Activated CD4-positive, alpha-beta memory T cell treated with anti-CD3 and anti-CD28 coated beads for 36 hours (primary cell): ENCODE measurements at regions of chr16 and their contacts with region 1.

Region 1: DNA sequence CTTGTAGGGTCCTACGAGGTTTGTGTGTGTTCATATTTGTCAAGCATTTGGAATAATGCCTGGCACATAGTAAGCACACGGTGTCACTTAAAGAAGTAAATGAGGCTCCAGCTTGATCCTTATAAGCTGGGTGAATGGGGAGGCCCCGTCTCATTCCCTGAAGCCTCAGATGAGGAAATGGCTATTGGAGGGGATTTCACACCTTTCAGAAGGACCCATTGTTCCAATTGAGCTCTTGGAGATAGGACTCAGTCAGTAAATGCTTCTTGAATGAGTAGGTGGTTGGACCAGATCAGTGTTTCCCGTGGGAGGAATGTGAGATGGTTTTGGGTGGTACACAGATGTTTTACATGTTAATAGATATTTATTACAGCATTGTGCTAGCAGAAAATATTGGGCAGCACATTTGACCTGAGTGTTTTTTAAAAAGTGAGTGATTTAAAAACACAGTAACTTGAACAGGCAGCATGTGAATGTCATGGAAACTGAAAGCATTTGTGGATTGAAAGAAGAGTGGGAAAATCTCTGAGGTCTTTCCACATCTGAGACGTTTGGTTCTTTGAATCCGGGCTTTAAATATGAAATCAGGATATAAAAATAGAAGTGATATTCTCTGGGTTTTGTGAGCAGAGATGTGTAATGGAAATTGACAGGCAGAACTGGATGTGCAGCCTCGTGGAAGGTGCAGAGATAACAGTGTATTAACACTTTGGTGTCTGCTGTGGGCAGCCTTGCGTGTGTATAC is 36.4 kb upstream of the ARHGAP17 start:
- DNase-seq: no peak
- H3K4me3 Mint-ChIP-seq: peak overlapping the region; percentile 54
- H3K27ac Mint-ChIP-seq: peak overlapping the region; percentile 74
- H3K4me1 Mint-ChIP-seq: peaks cover 47% of the 10 kb centered on the region
- H3K27me3 Mint-ChIP-seq: no peaks in the 10 kb centered on the region

Region 2: GRCh38 chr16:24918641-24919040 is 132.9 kb before region 1 on chr16:
- CTCF ChIA-PET with region 1: no interaction called
- POLR2A ChIA-PET with region 1: no interaction called
- intact Hi-C with region 1: no loop called
- DNase-seq: no peak
- H3K4me3 Mint-ChIP-seq: no peak overlapping the region
- H3K27ac Mint-ChIP-seq: no peak overlapping the region
- H3K4me1 Mint-ChIP-seq: peaks cover 10% of the 10 kb centered on the region
- H3K27me3 Mint-ChIP-seq: no peaks in the 10 kb centered on the region

Region 3: DNA sequence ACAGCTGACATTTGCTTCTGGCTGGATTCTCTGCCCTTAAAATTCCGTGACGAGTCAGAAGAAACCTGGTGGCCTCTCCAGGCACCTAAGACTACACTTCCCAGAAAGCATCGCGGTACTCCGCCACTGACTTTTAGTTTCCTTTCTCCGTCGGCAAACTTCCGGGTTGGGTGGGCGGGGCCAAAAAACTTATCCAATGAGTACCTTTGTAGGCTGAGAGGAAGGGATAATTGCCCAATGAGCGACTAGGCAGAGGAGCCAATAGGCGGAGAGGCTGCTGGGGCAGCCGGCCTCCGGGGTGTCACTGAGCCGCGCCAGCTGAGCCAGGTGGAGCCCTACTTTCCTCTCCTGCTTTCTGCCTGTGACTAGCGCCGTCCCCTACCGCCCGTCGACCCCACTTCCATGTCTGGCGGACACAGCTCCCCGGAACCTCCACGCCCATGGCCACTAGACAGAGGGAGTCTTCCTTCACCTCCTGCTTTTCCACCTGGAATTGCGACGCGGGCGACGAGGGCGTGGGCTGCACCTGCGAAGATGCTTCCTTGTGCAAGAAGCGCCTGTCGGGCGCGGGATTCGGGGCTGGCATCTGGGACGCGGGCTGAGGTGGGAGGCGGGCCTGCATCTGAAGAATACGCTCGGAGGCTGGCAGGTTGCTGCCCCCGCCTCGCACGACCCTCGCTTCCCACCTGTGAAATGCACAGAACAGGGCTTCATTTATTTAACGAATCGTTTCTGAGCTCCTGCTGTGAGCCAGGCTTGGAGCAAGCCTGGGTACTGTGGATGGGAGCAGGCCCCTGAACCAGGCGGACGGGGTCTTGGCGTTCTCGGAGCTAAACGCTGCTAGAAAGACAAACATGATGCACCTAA is 19.9 kb before region 1 on chr16:
- CTCF ChIA-PET with region 1: interaction called, 5 read pairs
- POLR2A ChIA-PET with region 1: interaction called, 7 read pairs
- intact Hi-C with region 1: loop called (anchors 1 kb)
- DNase-seq: peak; percentile 94
- H3K4me3 Mint-ChIP-seq: peak overlapping the region; percentile 92
- H3K27ac Mint-ChIP-seq: peak overlapping the region; percentile 91
- H3K4me1 Mint-ChIP-seq: peaks cover 34% of the 10 kb centered on the region
- H3K27me3 Mint-ChIP-seq: no peaks in the 10 kb centered on the region

Region 4: DNA sequence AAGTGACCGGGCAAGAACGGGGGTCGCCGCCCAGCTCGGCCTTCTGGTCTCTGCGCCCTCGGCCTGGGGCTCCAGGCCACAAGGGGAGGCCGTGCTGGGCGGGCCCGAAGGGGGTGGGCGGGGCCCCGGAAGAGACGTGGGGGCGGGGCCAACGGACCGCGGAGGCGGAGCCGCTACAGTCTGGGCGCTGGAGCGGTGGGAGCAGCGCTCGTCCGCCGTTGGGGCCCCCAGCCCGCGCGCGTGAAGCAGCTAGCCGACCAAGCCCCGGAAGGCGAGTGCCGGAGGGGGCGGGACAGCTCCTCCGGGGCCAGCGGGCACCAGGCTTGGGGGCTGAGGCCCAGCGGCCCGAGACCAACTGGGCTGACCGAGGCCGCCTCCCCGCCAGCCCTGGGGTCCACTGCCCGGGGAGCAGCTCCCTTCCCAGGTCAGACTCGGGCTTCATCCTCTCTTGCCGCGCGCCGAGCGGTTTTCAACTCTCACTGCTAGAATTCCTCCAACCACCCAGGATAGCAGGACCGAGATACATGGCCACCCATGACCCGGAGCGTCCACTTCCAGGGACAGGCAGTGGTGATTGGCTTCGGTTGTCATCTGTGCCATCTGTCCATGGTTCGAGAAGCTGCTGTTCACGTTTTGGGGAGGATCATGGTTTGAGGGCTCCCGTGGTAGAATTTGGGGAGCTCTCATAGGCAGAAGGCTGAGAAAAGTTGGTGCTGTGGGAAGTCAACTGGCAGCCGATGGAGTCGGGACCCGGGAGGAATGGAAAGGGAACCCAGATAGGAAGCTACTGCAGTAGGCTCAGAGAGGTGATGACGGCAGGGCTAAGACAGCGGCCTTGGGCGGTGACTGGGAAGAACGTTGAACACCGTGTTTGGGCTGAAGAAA is 15.4 kb after region 1 on chr16:
- CTCF ChIA-PET with region 1: interaction called, 5 read pairs
- POLR2A ChIA-PET with region 1: interaction called, 3 read pairs
- intact Hi-C with region 1: loop called (anchors 2 kb)
- DNase-seq: peak; percentile 92
- H3K4me3 Mint-ChIP-seq: peak overlapping the region; percentile 83
- H3K27ac Mint-ChIP-seq: peak overlapping the region; percentile 77
- H3K4me1 Mint-ChIP-seq: peaks cover 27% of the 10 kb centered on the region
- H3K27me3 Mint-ChIP-seq: no peaks in the 10 kb centered on the region

Region 5: DNA sequence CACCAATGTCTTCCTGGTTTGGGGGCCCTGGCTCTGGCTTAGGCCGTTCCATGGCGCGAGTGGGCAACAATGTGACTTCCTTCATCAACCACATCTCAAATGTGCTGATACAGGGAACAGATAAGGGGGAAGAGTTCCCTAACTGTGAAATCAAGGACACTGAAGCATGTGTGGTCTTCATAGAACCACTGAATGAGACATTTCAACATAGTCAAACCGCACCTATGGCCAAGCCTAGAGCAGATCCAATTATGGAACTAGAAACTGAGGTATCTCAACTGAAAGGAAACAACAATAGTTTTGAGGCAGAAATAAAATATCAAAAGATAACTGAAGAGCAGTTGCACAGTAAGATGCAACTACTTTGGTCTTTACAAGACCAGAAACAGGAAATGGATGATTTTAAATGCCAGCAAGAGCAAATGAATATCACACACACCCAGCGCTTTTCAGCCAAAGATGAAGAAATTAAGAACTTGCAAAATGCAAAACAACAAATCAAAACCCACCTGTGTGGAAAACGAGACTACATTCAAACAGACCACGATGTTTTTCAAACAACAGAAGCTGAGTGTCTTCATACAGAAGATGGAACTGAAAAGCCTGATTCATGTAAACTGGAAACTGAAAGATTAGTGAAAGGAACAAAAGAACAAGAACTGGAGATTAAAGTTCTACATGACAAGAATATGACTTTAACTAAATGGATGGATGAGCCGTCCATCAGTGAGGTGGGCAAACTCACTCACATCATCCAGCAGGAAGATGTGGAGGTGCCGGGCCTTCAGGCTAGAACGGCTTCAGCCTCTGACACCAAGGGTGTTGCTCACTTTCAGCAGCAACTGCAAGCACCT is 41.9 kb after region 1 on chr16:
- CTCF ChIA-PET with region 1: interaction called, 3 read pairs
- POLR2A ChIA-PET with region 1: no interaction called
- intact Hi-C with region 1: loop called (anchors 1 kb)
- DNase-seq: peak; percentile 31
- H3K4me3 Mint-ChIP-seq: peak overlapping the region; percentile 14
- H3K27ac Mint-ChIP-seq: peak overlapping the region; percentile 68
- H3K4me1 Mint-ChIP-seq: peaks cover 22% of the 10 kb centered on the region
- H3K27me3 Mint-ChIP-seq: no peaks in the 10 kb centered on the region

Region 6: DNA sequence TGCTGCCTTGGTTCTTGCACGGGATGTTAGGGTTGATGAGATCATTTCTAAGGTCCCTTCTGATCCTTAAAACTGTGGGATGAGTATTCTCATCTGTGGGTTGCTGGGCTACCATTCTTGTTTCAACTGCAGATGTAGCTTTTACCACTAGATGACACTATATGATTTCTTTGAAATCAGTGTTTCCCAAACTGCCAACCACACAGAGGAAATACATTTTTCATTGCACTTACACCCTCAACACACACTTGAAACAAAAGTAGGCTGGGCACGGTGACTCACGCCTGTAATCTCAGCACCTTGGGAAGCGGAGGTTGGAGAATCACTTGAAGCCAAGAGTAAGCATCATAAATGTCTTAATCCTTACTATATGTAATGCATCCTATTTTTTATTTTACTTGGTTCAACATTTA is 75.2 kb after region 1 on chr16:
- CTCF ChIA-PET with region 1: no interaction called
- POLR2A ChIA-PET with region 1: interaction called, 3 read pairs
- intact Hi-C with region 1: loop called (anchors 1 kb)
- DNase-seq: peak; percentile 76
- H3K4me3 Mint-ChIP-seq: no peak overlapping the region
- H3K27ac Mint-ChIP-seq: peak overlapping the region; percentile 48
- H3K4me1 Mint-ChIP-seq: peaks cover 32% of the 10 kb centered on the region
- H3K27me3 Mint-ChIP-seq: no peaks in the 10 kb centered on the region